Endothelial cell of umbilical vein (primary cell): ENCODE measurements at regions of chr20 and their contacts with region 1.

Region 1: GRCh38 chr20:35303735-35304491 is 11.7 kb upstream of the FAM83C start:
- DNase-seq: peak; percentile 87
- H3K4me3 ChIP-seq: no peak overlapping the region
- H3K27ac ChIP-seq: peak overlapping the region; percentile 82
- H3K4me1 ChIP-seq: peaks cover 67% of the 10 kb centered on the region
- H3K27me3 ChIP-seq: no peaks in the 10 kb centered on the region
- CTCF ChIP-seq: peak; percentile 93 to 95
- POLR2A ChIP-seq: no peak

Region 2: GRCh38 chr20:35284267-35284991 is 19.5 kb before region 1 on chr20 and contains the start of gene EIF6:
- CTCF ChIA-PET with region 1: interaction called, 24 read pairs
- POLR2A ChIA-PET with region 1: no interaction called
- dilution Hi-C with region 1: no loop called
- intact Hi-C with region 1: loop called (anchors 1 kb)
- DNase-seq: peak; percentile 77
- H3K4me3 ChIP-seq: peak within 1 kb of the TSS; percentile 82 to 93 (median 89)
- H3K27ac ChIP-seq: peak within 1 kb of the TSS; percentile 59
- H3K4me1 ChIP-seq: peaks cover 12% of the 10 kb centered on the region
- H3K27me3 ChIP-seq: no peaks in the 10 kb centered on the region
- CTCF ChIP-seq: no peak
- POLR2A ChIP-seq: peak; percentile 67
- total RNA-seq, gene EIF6: 124 and 153 TPM in 2 replicates

Region 3: GRCh38 chr20:35318502-35319157 is 14.7 kb after region 1 on chr20:
- CTCF ChIA-PET with region 1: interaction called, 83 read pairs
- POLR2A ChIA-PET with region 1: interaction called, 5 read pairs
- dilution Hi-C with region 1: no loop called
- intact Hi-C with region 1: no loop called
- DNase-seq: peak; percentile 74
- H3K4me3 ChIP-seq: no peak overlapping the region
- H3K27ac ChIP-seq: peak overlapping the region; percentile 74
- H3K4me1 ChIP-seq: peaks cover 43% of the 10 kb centered on the region
- H3K27me3 ChIP-seq: no peaks in the 10 kb centered on the region
- CTCF ChIP-seq: no peak
- POLR2A ChIP-seq: no peak

Region 4: DNA sequence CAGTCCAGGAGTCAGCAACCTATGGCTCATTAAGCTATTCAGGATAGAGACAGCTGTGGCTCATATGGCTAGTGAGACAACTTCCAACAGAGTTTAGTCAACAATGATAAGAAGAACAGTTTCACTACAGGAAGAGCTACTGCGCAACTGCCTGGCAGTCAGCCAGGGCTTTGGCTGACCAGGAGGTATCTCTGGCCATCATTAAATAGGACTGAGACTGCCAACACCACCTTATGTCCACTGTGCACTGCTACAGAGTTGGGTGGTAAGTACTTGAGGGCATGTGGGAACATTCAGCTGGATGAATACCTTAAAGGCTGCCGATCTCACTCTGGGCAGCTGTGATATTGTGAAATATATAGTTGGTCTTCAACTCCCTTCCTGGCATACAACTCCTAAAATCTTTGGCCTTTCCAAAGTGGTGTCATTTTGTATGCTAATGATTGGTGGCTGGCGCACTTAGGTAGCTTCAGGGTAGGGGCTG is 40.5 kb after region 1 on chr20:
- CTCF ChIA-PET with region 1: interaction called, 16 read pairs
- POLR2A ChIA-PET with region 1: no interaction called
- dilution Hi-C with region 1: no loop called
- intact Hi-C with region 1: no loop called
- DNase-seq: peak; percentile 88
- H3K4me3 ChIP-seq: no peak overlapping the region
- H3K27ac ChIP-seq: no peak overlapping the region
- H3K4me1 ChIP-seq: peaks cover 10% of the 10 kb centered on the region
- H3K27me3 ChIP-seq: no peaks in the 10 kb centered on the region
- CTCF ChIP-seq: no peak
- POLR2A ChIP-seq: no peak

Region 5: DNA sequence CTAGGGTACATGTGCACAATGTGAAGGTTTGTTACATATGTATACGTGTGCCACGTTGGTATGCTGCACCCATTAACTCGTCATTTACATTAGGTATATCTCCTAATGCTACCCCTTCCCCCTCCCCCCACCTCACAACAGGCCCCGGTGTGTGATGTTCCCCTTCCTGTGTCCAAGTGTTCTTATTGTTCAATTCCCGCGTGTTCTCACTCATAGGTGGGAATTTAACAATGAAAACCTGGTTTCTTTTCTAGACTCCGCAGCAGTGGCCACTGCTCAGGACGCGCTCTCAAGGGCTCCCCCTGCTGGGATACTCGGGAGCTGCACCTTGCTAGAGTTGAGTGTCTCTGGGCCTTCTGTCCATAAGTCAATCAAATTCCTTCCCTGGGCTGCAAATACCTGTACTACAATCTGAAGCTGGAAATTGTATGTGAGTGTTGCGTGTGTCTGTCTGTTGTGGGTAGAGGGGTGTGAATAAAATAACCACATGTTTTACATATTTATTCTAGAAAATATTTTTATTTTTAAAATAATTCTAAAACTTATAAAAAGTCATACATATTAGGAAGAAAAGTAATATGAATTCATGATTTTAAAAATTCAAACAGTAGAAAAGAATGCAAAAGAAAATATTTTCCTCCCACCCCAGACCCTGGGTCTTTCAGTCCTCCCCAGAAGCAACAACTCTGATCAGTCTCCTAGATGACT is 143.3 kb after region 1 on chr20:
- CTCF ChIA-PET with region 1: interaction called, 200 read pairs
- POLR2A ChIA-PET with region 1: no interaction called
- dilution Hi-C with region 1: no loop called
- intact Hi-C with region 1: loop called (anchors 1 kb)
- DNase-seq: peak; percentile 90
- H3K4me3 ChIP-seq: peak overlapping the region; percentile 21 to 42 (median 22)
- H3K27ac ChIP-seq: no peak overlapping the region
- H3K4me1 ChIP-seq: peaks cover 3% of the 10 kb centered on the region
- H3K27me3 ChIP-seq: no peaks in the 10 kb centered on the region
- CTCF ChIP-seq: peak; percentile 87 to 94
- POLR2A ChIP-seq: no peak